ENCODE measurements at regions of chr7 and their contacts with region 1.

Region 1: GRCh38 chr7:134954197-134955082 is 31.9 kb upstream of the AGBL3 start:
- DNase-seq: peak; percentile 67
- H3K4me3 ChIP-seq: no peak overlapping the region
- H3K27ac ChIP-seq: 0 out of 2 replicates have a peak overlapping the region, but pooled peaks have one; percentile 5
- H3K4me1 ChIP-seq: peaks cover 5% of the 10 kb centered on the region; the same call in 1 of the 2 replicates
- H3K27me3 ChIP-seq: no peaks in the 10 kb centered on the region

Region 2: GRCh38 chr7:134690016-134690415 is 264.4 kb before region 1 on chr7:
- in situ Hi-C with region 1: loop called (anchors 25 kb)
- DNase-seq: peak; percentile 83
- H3K4me3 ChIP-seq: peak overlapping the region; percentile 43
- H3K27ac ChIP-seq: peak overlapping the region; percentile 86
- H3K4me1 ChIP-seq: peaks cover 65% of the 10 kb centered on the region
- H3K27me3 ChIP-seq: no peaks in the 10 kb centered on the region

Region 3: GRCh38 chr7:134804351-134804750 is 150.1 kb before region 1 on chr7:
- in situ Hi-C with region 1: no loop called
- DNase-seq: peak; percentile 53
- H3K4me3 ChIP-seq: peak overlapping the region; percentile 34
- H3K27ac ChIP-seq: peak overlapping the region; percentile 52
- H3K4me1 ChIP-seq: peaks cover 56% of the 10 kb centered on the region
- H3K27me3 ChIP-seq: no peaks in the 10 kb centered on the region

Region 4: GRCh38 chr7:136348542-136349192 is 1394.2 kb after region 1 on chr7:
- in situ Hi-C with region 1: no loop called
- DNase-seq: no peak
- H3K4me3 ChIP-seq: no peak overlapping the region
- H3K27ac ChIP-seq: no peak overlapping the region
- H3K4me1 ChIP-seq: no peaks in the 10 kb centered on the region
- H3K27me3 ChIP-seq: no peaks in the 10 kb centered on the region